Heart left ventricle (tissue), 16 donors: ENCODE measurements at regions of chr14 and their contacts with region 1.

Region 1: DNA sequence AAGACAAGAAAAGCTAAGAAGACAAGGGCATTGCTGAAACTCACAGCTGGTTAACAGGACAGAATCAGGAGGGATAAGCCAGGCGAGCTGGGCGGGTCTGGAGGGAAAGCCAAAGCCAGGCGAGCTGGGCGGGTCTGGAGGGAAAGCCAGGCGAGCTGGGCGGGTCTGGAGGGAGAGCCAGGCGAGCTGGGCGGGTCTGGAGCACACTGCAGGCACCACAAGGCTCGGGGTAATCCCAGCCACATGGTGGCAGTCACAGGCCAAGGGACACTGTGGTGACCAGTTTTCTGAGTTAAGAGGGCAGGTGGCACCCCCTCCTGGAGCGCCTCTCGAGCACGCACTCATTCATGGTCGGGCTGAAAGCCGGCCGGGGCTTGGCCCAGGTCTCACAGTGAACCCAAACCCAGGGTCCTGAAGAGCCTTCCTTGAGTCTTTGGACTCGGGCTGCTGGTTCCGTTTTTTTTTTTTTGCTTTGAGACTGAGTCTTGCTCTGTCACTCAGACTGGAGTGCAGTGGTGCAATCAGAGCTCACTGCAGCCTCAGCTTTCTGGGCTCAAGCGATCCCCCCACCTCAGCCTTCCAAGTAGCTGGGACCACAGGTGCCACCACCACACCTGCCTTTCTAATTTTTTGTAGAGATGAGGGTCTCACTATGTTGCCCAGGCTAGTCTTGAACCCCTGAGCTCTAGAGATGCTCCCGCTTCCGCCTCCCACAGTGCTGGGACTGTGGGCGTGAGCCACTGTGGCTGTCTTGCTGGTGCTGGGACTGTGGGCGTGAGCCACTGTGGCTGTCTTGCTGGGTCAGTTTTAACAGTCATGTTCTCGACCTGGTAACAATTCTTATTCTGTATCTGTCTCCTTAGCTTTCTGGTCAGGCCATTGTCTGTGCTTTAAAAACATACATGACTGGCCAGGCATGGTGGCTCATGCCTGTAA is 40.2 kb downstream of the HSP90AA1 start:
- DNase-seq: peak; percentile 82 to 91 (median 86)
- ATAC-seq: peak; percentile 90 to 93 (median 91)
- H3K4me3 ChIP-seq: no peak overlapping the region
- H3K27ac ChIP-seq: peak overlapping the region in 4 of 12 donors; percentile 18 to 83 (median 52)
- H3K4me1 ChIP-seq: peaks cover 0 to 40% (median 11%) of the 10 kb centered on the region in 12 donors
- H3K27me3 ChIP-seq: no peaks in the 10 kb centered on the region
- CTCF ChIP-seq: peak in 11 of 12 donors; percentile 30 to 81 (median 57)
- POLR2A ChIP-seq: no peak

Region 2: GRCh38 chr14:101972268-101972774 is 74.3 kb before region 1 on chr14:
- intact Hi-C with region 1: loop called in 1 of 10 experiments (anchors 5 kb)
- DNase-seq: peak; percentile 78 to 90 (median 85)
- ATAC-seq: peak; percentile 95 to 100 (median 99)
- H3K4me3 ChIP-seq: peak overlapping the region in 4 of 12 donors; percentile 4 to 37 (median 16)
- H3K27ac ChIP-seq: peak overlapping the region; percentile 13 to 79 (median 70)
- H3K4me1 ChIP-seq: peaks cover 8 to 69% (median 47%) of the 10 kb centered on the region in 12 donors
- H3K27me3 ChIP-seq: no peaks in the 10 kb centered on the region
- CTCF ChIP-seq: no peak
- POLR2A ChIP-seq: no peak

Region 3: GRCh38 chr14:101992708-101993107 is 53.9 kb before region 1 on chr14:
- intact Hi-C with region 1: loop called in 1 of 10 experiments (anchors 10 kb)
- DNase-seq: no peak
- ATAC-seq: peak; percentile 45 to 83 (median 76)
- H3K4me3 ChIP-seq: no peak overlapping the region
- H3K27ac ChIP-seq: no peak overlapping the region
- H3K4me1 ChIP-seq: peaks cover 0 to 5% (median 0%) of the 10 kb centered on the region in 12 donors
- H3K27me3 ChIP-seq: no peaks in the 10 kb centered on the region
- CTCF ChIP-seq: no peak
- POLR2A ChIP-seq: no peak

Region 4: GRCh38 chr14:102096214-102097114 is 49.9 kb after region 1 on chr14:
- intact Hi-C with region 1: loop called in 9 of 10 experiments (anchors 1 to 10 kb)
- DNase-seq: peak; percentile 83 to 91 (median 87)
- ATAC-seq: peak; percentile 81 to 91 (median 86)
- H3K4me3 ChIP-seq: no peak overlapping the region
- H3K27ac ChIP-seq: no peak overlapping the region
- H3K4me1 ChIP-seq: peaks cover 0 to 9% (median 0%) of the 10 kb centered on the region in 12 donors
- H3K27me3 ChIP-seq: no peaks in the 10 kb centered on the region
- CTCF ChIP-seq: peak; percentile 69 to 91 (median 83)
- POLR2A ChIP-seq: no peak

Region 5: GRCh38 chr14:102139248-102140026 is 92.8 kb after region 1 on chr14 and contains the start of gene WDR20:
- intact Hi-C with region 1: no loop called
- DNase-seq: peak; percentile 98 to 99 (median 99)
- ATAC-seq: peak; percentile 99 to 100 (median 100)
- H3K4me3 ChIP-seq: peak within 1 kb of the TSS; percentile 74 to 100 (median 96)
- H3K27ac ChIP-seq: peak within 1 kb of the TSS; percentile 30 to 92 (median 86)
- H3K4me1 ChIP-seq: peaks cover 0 to 35% (median 22%) of the 10 kb centered on the region in 12 donors
- H3K27me3 ChIP-seq: no peaks in the 10 kb centered on the region
- CTCF ChIP-seq: no peak
- POLR2A ChIP-seq: peak in 1 of 2 donors; percentile 49
- total RNA-seq, gene WDR20: 15.8 to 26.5 (median 21.2) TPM

Region 6: DNA sequence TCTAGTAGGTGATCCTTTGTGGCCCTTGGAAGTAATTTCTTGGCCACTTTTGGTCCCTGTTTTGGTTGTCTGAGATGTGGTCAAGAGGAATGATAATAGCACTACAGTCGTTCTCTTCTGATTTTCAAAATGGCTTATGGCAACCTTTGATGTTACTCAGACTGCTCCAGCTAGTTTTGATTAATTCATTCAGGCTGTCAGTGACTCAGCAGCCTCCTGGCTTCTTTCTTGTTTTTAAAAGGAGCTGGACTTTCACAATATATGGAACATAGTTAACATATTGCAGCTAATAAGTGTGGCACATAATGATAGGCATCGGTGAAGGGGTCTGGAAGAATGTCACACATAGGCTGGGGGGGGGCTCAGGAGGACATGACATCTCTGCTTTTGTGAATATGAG is 140.4 kb after region 1 on chr14:
- intact Hi-C with region 1: no loop called
- DNase-seq: no peak
- ATAC-seq: peak in 1 of 4 donors; percentile 44
- H3K4me3 ChIP-seq: no peak overlapping the region
- H3K27ac ChIP-seq: no peak overlapping the region
- H3K4me1 ChIP-seq: peaks cover 0 to 51% (median 36%) of the 10 kb centered on the region in 12 donors
- H3K27me3 ChIP-seq: no peaks in the 10 kb centered on the region
- CTCF ChIP-seq: no peak
- POLR2A ChIP-seq: no peak

Region 7: GRCh38 chr14:102215071-102215470 is 168.5 kb after region 1 on chr14:
- intact Hi-C with region 1: loop called in 1 of 10 experiments (anchors 10 kb)
- DNase-seq: peak in 4 of 5 donors; percentile 44 to 55 (median 52)
- ATAC-seq: peak; percentile 64 to 80 (median 76)
- H3K4me3 ChIP-seq: no peak overlapping the region
- H3K27ac ChIP-seq: peak overlapping the region; percentile 7 to 78 (median 54)
- H3K4me1 ChIP-seq: peaks cover 0 to 52% (median 27%) of the 10 kb centered on the region in 12 donors
- H3K27me3 ChIP-seq: no peaks in the 10 kb centered on the region
- CTCF ChIP-seq: no peak
- POLR2A ChIP-seq: no peak